Calu3 (cell line): ENCODE measurements at regions of chr2 and their contacts with region 1.

Region 1: DNA sequence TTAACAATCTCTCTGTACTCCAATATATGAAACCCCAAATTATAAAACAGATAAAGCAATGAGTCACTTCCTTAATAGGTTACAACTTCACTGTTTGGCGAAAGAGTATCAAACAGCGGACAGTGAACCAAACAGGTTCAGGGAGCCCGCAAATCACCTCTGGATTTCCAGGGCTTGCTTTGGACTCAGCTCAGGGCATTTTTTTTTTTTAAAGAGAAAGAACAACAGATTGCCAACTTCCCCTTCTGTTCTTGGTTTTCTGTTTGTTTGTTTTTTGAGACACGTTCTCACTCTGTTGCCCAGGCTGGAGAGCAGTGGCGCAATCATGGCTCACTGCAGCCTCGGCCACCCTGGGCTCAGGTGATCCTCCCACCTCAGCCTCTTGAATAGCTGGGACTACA is 52.7 kb downstream of the ABCB11 start:
- DNase-seq: peak; percentile 77
- H3K4me3 Mint-ChIP-seq: no peak overlapping the region
- H3K27ac Mint-ChIP-seq: peak overlapping the region; percentile 45
- H3K4me1 Mint-ChIP-seq: peaks cover 42% of the 10 kb centered on the region
- H3K27me3 Mint-ChIP-seq: no peaks in the 10 kb centered on the region
- CTCF ChIP-seq: no peak

Region 2: DNA sequence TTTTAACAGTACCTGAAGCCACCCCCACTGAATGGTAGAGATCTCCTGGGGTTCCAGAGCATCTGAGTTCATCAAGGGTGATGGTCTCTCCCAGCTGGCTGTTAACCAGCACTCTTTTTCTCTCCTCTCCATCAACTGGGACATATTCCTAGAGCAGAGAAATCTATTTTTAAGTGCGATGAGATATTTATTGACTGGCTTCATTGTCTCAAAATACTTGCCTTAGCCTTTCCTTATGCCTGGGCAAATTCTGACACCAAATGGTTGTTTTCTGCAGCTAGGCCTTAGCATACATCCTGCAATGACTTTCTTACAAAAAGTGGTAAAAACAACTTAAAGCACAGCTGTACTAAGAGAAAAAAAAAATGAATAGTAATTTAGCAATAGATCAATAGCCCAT is 156.5 kb before region 1 on chr2:
- CTCF ChIA-PET with region 1: interaction called, 14 read pairs
- intact Hi-C with region 1: no loop called
- DNase-seq: no peak
- H3K4me3 Mint-ChIP-seq: no peak overlapping the region
- H3K27ac Mint-ChIP-seq: no peak overlapping the region
- H3K4me1 Mint-ChIP-seq: peaks cover 8% of the 10 kb centered on the region
- H3K27me3 Mint-ChIP-seq: no peaks in the 10 kb centered on the region
- CTCF ChIP-seq: no peak

Region 3: GRCh38 chr2:168992591-168993349 is 14.3 kb after region 1 on chr2:
- CTCF ChIA-PET with region 1: interaction called, 10 read pairs
- intact Hi-C with region 1: no loop called
- DNase-seq: no peak
- H3K4me3 Mint-ChIP-seq: no peak overlapping the region
- H3K27ac Mint-ChIP-seq: peak overlapping the region; percentile 34
- H3K4me1 Mint-ChIP-seq: peaks cover 38% of the 10 kb centered on the region
- H3K27me3 Mint-ChIP-seq: no peaks in the 10 kb centered on the region
- CTCF ChIP-seq: no peak